ENCODE measurements at regions of chr10 and their contacts with region 1.

Region 1: GRCh38 chr10:21732067-21732772 is 198.2 kb downstream of the MLLT10 start:
- DNase-seq: peak; percentile 49 to 65
- ATAC-seq: peak; percentile 85 to 98 (median 95)
- H3K4me3 ChIP-seq: no peak overlapping the region
- H3K27ac ChIP-seq: no peak overlapping the region
- H3K4me1 ChIP-seq: peaks cover 0 to 16% (median 5%) of the 10 kb centered on the region in 9 donors
- H3K27me3 ChIP-seq: no peaks in the 10 kb centered on the region
- CTCF ChIP-seq: peak; percentile 66 to 95 (median 90)

Region 2: DNA sequence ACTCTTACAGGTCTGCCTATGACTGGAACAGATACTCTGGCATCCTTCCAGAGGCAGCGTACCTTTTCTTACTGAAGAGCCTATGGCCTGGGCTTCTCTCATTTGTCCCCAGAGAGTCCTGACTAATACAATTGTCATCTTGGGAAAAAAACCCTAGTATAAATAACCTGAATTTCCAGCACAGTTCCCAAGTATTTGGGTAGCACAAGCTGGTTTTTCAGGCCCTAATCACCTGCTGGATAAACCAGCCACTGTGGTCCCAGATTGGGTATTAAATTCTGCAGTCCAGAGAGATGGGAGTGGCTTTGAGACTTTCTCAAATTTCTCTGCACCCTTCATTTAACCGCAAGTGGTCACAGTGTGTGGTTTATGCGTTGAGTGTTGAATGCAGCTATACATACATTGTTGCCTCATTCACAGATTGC is 648.3 kb before region 1 on chr10:
- intact Hi-C with region 1: loop called in 1 of 10 experiments (anchors 10 kb)
- DNase-seq: no peak
- ATAC-seq: no peak
- H3K4me3 ChIP-seq: no peak overlapping the region
- H3K27ac ChIP-seq: no peak overlapping the region
- H3K4me1 ChIP-seq: peaks cover 0 to 5% (median 0%) of the 10 kb centered on the region in 9 donors
- H3K27me3 ChIP-seq: no peaks in the 10 kb centered on the region
- CTCF ChIP-seq: no peak

Region 3: DNA sequence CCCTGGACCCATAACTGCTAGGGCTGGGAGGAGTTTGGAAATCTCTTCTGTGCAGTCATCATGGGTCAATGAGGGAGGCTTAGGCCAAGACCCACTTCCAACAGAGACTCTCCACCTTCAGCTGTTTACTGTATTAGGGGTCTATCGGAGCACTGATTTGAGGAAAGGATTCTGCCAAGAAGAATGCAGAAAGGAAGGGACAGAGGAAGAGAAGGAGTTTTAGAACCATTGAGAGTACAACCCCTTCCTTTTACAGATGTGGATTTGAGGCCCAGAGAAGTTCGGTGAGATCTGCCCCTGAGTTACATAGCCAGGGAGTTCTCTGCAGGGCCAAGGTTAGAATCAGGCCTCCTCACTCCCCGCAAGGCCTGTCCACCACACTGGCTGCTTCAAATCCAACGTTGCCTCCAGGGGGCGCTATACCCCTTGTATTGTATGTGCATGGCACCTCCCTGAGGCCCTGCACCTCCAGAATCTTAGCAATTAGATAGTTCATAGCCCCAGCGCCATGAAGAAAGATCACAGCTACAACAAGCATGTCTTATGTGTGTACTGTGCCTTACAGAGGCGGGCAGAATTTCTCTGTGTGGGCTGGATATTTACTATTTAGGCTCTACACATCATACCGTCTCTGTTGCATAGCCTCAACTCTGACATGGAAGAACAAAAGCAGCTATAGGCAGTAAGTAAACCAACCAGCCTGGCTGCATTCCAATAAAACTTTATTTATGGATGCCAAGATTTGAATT is 453.6 kb before region 1 on chr10:
- intact Hi-C with region 1: loop called in 9 of 10 experiments (anchors 2 to 10 kb)
- DNase-seq: peak; percentile 93 to 96
- ATAC-seq: peak; percentile 92 to 99 (median 98)
- H3K4me3 ChIP-seq: no peak overlapping the region
- H3K27ac ChIP-seq: peak overlapping the region in 2 of 10 donors; percentile 17 to 30
- H3K4me1 ChIP-seq: peaks cover 0 to 9% (median 5%) of the 10 kb centered on the region in 9 donors
- H3K27me3 ChIP-seq: no peaks in the 10 kb centered on the region
- CTCF ChIP-seq: peak; percentile 66 to 89 (median 86)

Region 4: GRCh38 chr10:21285742-21286331 is 446.4 kb before region 1 on chr10:
- intact Hi-C with region 1: loop called in 1 of 10 experiments (anchors 10 kb)
- DNase-seq: no peak
- ATAC-seq: no peak
- H3K4me3 ChIP-seq: no peak overlapping the region
- H3K27ac ChIP-seq: no peak overlapping the region
- H3K4me1 ChIP-seq: no peaks in the 10 kb centered on the region
- H3K27me3 ChIP-seq: no peaks in the 10 kb centered on the region
- CTCF ChIP-seq: no peak

Region 5: GRCh38 chr10:21547246-21547645 is 185.0 kb before region 1 on chr10:
- intact Hi-C with region 1: loop called in 2 of 10 experiments (anchors 10 kb)
- DNase-seq: no peak
- ATAC-seq: no peak
- H3K4me3 ChIP-seq: no peak overlapping the region
- H3K27ac ChIP-seq: no peak overlapping the region
- H3K4me1 ChIP-seq: peaks cover 0 to 24% (median 8%) of the 10 kb centered on the region in 9 donors
- H3K27me3 ChIP-seq: no peaks in the 10 kb centered on the region
- CTCF ChIP-seq: no peak

Region 6: DNA sequence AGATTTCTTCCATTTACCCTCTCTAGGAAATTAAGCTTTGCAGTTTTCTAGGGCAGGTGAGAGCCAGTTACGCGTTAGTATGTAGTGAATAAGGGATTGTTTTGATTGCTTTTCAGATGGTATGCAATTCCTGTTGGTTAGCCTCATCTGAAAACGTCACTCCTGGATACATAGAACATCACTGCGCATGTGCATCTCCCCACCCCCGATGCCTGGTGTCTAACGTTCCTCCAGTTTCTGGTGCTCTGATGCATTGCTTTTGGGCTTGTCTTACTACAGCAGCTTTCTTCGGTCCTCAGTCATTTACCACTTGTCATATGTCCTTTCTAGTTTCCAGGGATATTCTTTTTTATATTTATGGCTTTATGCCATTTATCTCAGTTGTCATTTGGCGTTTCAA is 175.7 kb before region 1 on chr10:
- intact Hi-C with region 1: loop called in 1 of 10 experiments (anchors 10 kb)
- DNase-seq: no peak
- ATAC-seq: no peak
- H3K4me3 ChIP-seq: no peak overlapping the region
- H3K27ac ChIP-seq: no peak overlapping the region
- H3K4me1 ChIP-seq: peaks cover 0 to 21% (median 3%) of the 10 kb centered on the region in 9 donors
- H3K27me3 ChIP-seq: no peaks in the 10 kb centered on the region
- CTCF ChIP-seq: no peak

Region 7: GRCh38 chr10:21675157-21675796 is 56.9 kb before region 1 on chr10:
- intact Hi-C with region 1: no loop called
- DNase-seq: no peak
- ATAC-seq: peak in 1 of 8 donors; percentile 57
- H3K4me3 ChIP-seq: no peak overlapping the region
- H3K27ac ChIP-seq: no peak overlapping the region
- H3K4me1 ChIP-seq: peaks cover 0 to 21% (median 5%) of the 10 kb centered on the region in 9 donors
- H3K27me3 ChIP-seq: no peaks in the 10 kb centered on the region
- CTCF ChIP-seq: peak; percentile 26 to 75 (median 65)

Region 8: GRCh38 chr10:21754410-21755011 is 22.3 kb after region 1 on chr10:
- intact Hi-C with region 1: no loop called
- DNase-seq: no peak
- ATAC-seq: no peak
- H3K4me3 ChIP-seq: no peak overlapping the region
- H3K27ac ChIP-seq: no peak overlapping the region
- H3K4me1 ChIP-seq: peaks cover 0 to 16% (median 0%) of the 10 kb centered on the region in 9 donors
- H3K27me3 ChIP-seq: no peaks in the 10 kb centered on the region
- CTCF ChIP-seq: no peak

Region 9: DNA sequence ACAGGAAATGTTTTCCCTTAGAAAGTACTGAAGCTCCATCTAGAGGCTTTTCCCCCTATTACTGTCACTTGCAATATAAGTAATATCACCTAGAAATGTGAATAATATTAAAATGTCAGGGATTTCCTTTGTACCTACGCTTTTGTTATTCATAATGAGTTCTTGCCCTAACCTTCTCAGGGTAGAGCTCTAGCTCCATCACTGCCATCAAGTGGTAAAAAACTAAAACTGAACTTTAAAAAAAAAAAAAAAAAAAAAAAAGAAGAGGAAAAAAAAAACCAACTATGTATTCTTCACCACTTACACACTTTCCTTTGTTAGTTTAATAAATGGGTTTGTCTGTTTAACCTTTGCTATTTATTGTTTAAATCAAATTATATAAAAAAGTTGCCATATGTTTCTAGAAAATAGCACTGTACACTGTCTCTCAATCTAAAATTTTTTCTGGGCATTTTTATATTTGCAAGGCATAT is 221.4 kb after region 1 on chr10:
- intact Hi-C with region 1: loop called in 2 of 10 experiments (anchors 5 to 10 kb)
- DNase-seq: no peak
- ATAC-seq: peak in 5 of 8 donors; percentile 52 to 72 (median 59)
- H3K4me3 ChIP-seq: no peak overlapping the region
- H3K27ac ChIP-seq: no peak overlapping the region
- H3K4me1 ChIP-seq: peaks cover 0 to 22% (median 13%) of the 10 kb centered on the region in 9 donors
- H3K27me3 ChIP-seq: no peaks in the 10 kb centered on the region
- CTCF ChIP-seq: peak in 8 of 9 donors; percentile 10 to 64 (median 46)

Measured in heart right ventricle (tissue), 16 donors.